Activated naive CD4-positive, alpha-beta T cell treated with anti-CD3 and anti-CD28 coated beads for 36 hours (primary cell): ENCODE measurements at regions of chr11 and their contacts with region 1.

Region 1: GRCh38 chr11:58579192-58580129 is 598 bp downstream of the ZFP91 start:
- DNase-seq: peak; percentile 95
- H3K4me3 Mint-ChIP-seq: peak overlapping the region; percentile 100
- H3K27ac Mint-ChIP-seq: peak overlapping the region; percentile 99
- H3K4me1 Mint-ChIP-seq: peaks cover 53% of the 10 kb centered on the region
- H3K27me3 Mint-ChIP-seq: no peaks in the 10 kb centered on the region

Region 2: GRCh38 chr11:57426929-57427726 is 1152.3 kb before region 1 on chr11 and contains the start of gene SLC43A3:
- CTCF ChIA-PET with region 1: no interaction called
- intact Hi-C with region 1: loop called (anchors 1 kb)
- DNase-seq: peak; percentile 84
- H3K4me3 Mint-ChIP-seq: peak within 1 kb of the TSS; percentile 95
- H3K27ac Mint-ChIP-seq: peak within 1 kb of the TSS; percentile 96
- H3K4me1 Mint-ChIP-seq: peaks cover 33% of the 10 kb centered on the region
- H3K27me3 Mint-ChIP-seq: no peaks in the 10 kb centered on the region
- total RNA-seq, gene SLC43A3: 116 to 117 TPM

Region 3: GRCh38 chr11:57712256-57713150 is 867.0 kb before region 1 on chr11 and contains the start of gene TMX2:
- CTCF ChIA-PET with region 1: no interaction called
- intact Hi-C with region 1: loop called (anchors 1 kb)
- DNase-seq: peak; percentile 95
- H3K4me3 Mint-ChIP-seq: peak within 1 kb of the TSS; percentile 99
- H3K27ac Mint-ChIP-seq: peak within 1 kb of the TSS; percentile 92
- H3K4me1 Mint-ChIP-seq: peaks cover 50% of the 10 kb centered on the region
- H3K27me3 Mint-ChIP-seq: no peaks in the 10 kb centered on the region
- total RNA-seq, gene TMX2: 49.8 to 54.7 TPM

Region 4: GRCh38 chr11:58192229-58192628 is 387.2 kb before region 1 on chr11:
- CTCF ChIA-PET with region 1: no interaction called
- intact Hi-C with region 1: no loop called
- DNase-seq: no peak
- H3K4me3 Mint-ChIP-seq: no peak overlapping the region
- H3K27ac Mint-ChIP-seq: no peak overlapping the region
- H3K4me1 Mint-ChIP-seq: no peaks in the 10 kb centered on the region
- H3K27me3 Mint-ChIP-seq: peaks cover 5% of the 10 kb centered on the region

Region 5: DNA sequence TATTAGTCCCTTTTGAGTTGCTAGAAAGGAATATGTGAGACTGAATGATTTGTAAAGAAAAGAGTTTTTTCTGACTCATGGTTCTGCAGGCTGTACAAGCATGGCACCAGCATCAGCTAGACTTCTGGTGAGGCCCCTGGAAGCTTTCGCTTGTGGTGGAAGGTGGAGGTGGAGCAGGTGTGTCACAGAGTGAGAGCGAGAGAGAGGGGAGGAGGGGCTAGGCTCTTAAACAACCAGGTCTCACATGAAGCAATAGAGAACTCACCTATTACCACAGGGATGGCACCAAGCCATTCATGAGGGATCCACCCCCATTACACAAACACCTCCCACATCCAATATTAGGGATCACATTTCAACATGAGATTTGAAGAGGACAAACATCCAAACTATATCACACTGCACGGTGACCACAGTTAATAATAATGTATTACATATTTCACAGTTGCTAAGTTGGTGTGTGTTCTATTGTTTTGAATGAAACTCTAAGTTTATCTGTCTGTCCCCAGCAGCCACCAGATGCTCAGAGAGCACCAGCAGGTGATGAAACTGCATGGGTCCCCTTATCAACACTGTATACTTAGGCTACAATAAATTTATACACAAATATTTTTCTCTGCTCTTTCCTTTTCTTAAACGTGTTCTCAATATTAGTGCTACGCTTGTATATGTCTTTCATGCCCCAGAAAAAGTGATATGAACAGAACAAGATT is 13.5 kb after region 1 on chr11:
- CTCF ChIA-PET with region 1: interaction called, 13 read pairs
- intact Hi-C with region 1: loop called (anchors 1 kb)
- DNase-seq: peak; percentile 71
- H3K4me3 Mint-ChIP-seq: no peak overlapping the region
- H3K27ac Mint-ChIP-seq: peak overlapping the region; percentile 67
- H3K4me1 Mint-ChIP-seq: peaks cover 73% of the 10 kb centered on the region
- H3K27me3 Mint-ChIP-seq: no peaks in the 10 kb centered on the region

Region 6: DNA sequence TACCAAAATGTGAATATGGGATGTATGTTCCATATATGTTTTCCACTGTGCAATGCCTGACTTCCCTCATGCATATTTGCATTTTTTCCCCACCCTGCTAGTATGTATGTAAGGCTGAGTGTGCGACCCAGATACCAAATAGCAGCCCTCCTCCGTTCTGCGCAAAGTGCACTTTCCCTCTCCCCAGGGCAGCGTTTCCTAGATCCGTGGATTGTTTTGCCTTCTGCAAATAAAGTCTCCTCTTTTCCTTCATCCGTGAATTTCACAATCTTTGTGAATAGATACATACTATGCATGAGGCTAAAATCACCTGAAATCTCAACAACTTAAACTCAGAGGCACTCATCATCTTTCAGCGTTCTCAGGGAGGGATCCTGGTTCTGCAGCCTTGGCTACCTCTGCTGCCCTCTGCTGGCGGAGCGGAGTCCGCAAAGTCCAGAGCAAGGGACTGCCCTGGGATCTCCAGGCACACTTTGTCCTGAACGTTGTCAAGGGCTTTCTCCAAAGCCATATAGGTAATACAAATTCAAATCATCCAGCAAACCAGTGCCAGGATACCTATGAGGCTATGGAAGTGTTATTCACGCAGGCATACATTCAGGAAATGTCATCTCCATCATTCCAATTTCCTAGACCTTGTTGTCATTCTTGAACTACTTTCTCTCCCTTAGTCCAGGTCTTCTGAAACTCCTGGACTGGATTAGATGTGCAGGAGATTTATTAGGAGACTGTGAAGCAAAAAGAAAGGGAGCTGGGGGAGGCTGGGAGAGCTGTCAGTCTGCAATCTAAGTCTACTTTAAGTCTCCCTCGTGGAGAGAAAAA is 96.1 kb after region 1 on chr11:
- CTCF ChIA-PET with region 1: interaction called, 5 read pairs
- intact Hi-C with region 1: loop called (anchors 1 kb)
- DNase-seq: peak; percentile 84
- H3K4me3 Mint-ChIP-seq: no peak overlapping the region
- H3K27ac Mint-ChIP-seq: no peak overlapping the region
- H3K4me1 Mint-ChIP-seq: no peaks in the 10 kb centered on the region
- H3K27me3 Mint-ChIP-seq: no peaks in the 10 kb centered on the region

Region 7: DNA sequence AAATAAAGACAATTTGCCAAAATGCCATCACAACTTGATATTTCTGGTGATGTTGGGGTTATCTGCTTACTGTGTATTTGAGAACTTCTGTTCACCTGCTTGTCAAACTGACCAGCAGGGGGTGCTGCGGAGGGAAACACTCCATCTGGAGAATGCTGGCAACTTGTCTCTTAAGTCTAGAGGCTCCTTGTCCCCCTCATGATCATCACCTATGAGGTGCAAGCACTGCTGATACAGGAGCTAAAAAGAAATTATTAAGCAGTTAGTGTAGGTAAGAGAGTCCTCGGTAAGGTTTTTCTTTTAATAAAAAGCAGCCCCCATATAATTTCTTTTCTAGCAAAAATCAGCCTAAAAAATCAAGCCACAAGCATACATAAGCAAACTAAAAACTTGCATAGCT is 473.9 kb after region 1 on chr11:
- CTCF ChIA-PET with region 1: no interaction called
- intact Hi-C with region 1: loop called (anchors 1 kb)
- DNase-seq: peak; percentile 88
- H3K4me3 Mint-ChIP-seq: no peak overlapping the region
- H3K27ac Mint-ChIP-seq: no peak overlapping the region
- H3K4me1 Mint-ChIP-seq: peaks cover 3% of the 10 kb centered on the region
- H3K27me3 Mint-ChIP-seq: peaks cover 22% of the 10 kb centered on the region

Region 8: GRCh38 chr11:59615637-59616395 is 1036.4 kb after region 1 on chr11 and contains the start of gene OSBP:
- CTCF ChIA-PET with region 1: no interaction called
- intact Hi-C with region 1: loop called (anchors 1 kb)
- DNase-seq: peak; percentile 99
- H3K4me3 Mint-ChIP-seq: peak within 1 kb of the TSS; percentile 81
- H3K27ac Mint-ChIP-seq: peak within 1 kb of the TSS; percentile 86
- H3K4me1 Mint-ChIP-seq: peaks cover 35% of the 10 kb centered on the region
- H3K27me3 Mint-ChIP-seq: no peaks in the 10 kb centered on the region
- total RNA-seq, gene OSBP: 33.9 to 37.0 TPM